Left colon (tissue), 2 donors: ENCODE measurements at regions of chr2 and their contacts with region 1.

Region 1: DNA sequence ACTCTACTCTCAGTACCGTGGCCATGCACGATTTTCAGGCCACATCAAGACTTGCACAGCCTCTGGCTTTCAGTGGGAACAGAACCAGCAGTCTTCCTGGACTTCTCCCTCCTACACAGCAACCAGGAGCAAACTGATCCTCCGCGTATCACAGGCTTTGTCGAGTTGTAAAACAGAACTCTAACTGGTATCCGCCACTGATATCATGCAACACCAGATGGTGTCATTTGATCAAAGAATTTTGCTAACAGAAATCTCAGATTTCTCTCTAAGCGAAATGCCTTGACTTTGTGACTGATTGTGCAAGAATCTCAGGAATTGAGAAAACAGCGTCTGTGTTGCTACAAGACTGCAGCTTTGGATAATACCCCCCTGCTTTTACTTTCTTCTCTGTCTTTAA is 85.7 kb downstream of the COPS8 start:
- DNase-seq: no peak
- ATAC-seq: no peak

Region 2: DNA sequence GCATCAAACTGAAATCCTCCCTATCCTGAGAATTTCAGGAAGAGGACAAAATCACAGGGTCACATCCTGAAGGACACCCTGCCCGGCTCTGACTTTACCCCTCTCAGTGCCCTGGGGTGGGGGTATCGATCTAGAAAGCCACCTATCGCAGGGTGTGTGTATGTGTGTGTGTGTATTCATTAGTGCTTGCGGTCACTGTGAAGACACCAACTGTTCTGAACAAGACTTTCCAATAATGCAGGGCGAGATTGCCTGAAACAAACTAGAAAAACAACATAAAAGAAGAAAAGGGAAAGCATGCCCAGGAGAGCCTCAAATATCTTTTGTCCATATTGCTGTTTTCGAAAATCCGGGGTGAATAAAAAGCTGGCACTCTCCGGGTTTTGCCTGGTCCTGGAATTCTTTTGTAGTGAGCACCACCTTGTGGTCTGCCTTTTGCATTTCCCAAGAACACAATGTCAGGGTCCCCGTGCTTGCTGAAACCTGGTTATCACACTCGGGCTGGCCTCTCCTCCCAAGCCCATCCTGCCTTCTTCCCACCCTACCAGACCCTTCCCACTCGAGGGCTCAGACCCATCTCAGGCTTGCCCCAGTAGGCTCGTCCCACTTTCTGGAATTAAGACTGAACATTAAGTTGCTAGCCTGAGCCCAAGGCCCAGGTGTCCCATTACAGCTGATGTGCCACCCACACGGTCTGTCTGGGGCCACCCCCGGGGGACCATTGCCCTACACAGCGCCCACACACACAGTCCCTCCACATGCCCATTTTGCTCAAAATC is 110.7 kb before region 1 on chr2:
- intact Hi-C with region 1: no loop called
- DNase-seq: peak in 1 of 2 donors; percentile 28
- ATAC-seq: peak; percentile 62

Region 3: DNA sequence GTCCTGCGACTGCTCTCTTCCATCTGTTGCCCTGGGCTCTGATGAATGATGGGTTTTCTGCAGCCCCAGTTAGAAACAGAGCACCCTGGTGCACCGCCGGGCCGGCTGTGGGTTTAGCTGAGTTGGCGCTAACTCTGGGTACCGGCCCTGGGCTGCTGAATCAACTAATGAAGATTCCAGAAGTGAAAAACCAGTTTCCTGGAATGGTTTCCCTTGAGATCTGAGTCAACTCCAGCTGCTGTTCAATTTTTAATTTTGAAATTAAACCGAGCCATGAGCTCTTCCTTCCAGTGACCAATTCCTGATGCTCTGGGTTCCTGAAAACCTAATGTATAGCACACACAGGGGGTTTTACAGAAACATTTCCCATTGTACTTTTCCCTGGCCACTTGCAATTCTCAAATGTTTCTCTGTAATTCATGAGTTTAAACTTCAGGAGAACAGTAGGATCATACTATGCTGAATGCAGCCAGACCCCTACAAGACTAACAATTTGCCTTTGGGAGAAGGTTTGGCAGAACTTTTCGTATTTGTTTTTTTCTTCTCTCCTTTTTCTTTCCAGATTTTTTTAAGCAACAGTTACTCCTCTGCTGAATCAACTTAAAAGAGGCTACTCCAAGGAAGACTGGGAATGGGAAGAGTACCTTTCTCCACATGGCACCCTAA is 237.1 kb after region 1 on chr2:
- intact Hi-C with region 1: loop called in 1 of 2 experiments (anchors 10 kb)
- DNase-seq: no peak
- ATAC-seq: no peak